Heart right ventricle (tissue), 16 donors: ENCODE measurements at regions of chr15 and their contacts with region 1.

Region 1: DNA sequence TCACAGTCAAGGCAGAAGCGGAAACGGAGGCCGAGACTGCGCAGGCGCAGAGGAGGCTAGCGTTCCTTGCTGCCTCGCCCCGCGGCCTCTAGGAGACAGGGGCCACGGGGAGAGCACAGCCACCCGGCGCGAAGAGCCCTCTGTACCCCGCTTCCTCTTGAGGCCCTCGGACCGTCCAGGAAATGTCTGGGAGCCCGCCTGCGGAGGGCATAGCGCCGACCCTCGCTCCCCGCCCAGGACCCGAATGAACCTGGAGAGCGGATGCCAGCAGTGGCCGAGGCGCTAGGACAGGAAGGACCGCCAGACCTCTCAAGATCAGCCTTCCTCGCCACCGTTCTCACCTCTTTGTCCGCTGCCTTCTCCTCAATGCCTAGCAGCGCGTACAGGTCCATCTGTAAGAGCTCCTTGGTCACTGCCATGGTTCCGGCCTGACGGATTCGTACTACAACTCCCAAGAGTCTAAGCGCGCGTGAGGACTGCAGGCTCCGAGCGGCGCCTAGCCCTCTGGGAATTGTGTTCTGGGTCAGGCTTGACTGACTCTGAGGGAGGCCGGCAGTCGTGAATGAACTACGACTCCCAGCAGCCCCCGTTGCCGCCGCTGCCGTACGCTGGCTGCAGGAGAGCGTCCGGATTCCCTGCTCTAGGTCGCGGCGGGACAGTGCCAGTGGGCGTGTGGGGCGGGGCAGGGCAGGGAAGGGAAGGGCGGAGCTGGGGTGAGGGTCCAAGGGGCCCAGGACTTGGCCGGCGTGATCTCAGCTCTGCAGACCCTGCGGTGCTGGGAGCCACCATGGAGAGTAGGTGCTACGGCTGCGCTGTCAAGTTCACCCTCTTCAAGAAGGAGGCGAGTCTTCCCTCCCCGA is at the starts of genes DNAJC17 and ZFYVE19:
- DNase-seq: peak; percentile 95 to 99
- ATAC-seq: peak; percentile 99
- H3K4me3 ChIP-seq: peak within 1 kb of the TSS; percentile 70 to 96 (median 88)
- H3K27ac ChIP-seq: peak within 1 kb of the TSS; percentile 80 to 99 (median 96)
- H3K4me1 ChIP-seq: peaks cover 3 to 56% (median 26%) of the 10 kb centered on the region in 9 donors
- H3K27me3 ChIP-seq: no peaks in the 10 kb centered on the region
- CTCF ChIP-seq: peak in 3 of 9 donors; percentile 18 to 31 (median 21)
- total RNA-seq, gene DNAJC17: 9.9 to 17.7 (median 14.7) TPM
- total RNA-seq, gene ZFYVE19: 14.2 to 29.2 (median 18.2) TPM

Region 2: DNA sequence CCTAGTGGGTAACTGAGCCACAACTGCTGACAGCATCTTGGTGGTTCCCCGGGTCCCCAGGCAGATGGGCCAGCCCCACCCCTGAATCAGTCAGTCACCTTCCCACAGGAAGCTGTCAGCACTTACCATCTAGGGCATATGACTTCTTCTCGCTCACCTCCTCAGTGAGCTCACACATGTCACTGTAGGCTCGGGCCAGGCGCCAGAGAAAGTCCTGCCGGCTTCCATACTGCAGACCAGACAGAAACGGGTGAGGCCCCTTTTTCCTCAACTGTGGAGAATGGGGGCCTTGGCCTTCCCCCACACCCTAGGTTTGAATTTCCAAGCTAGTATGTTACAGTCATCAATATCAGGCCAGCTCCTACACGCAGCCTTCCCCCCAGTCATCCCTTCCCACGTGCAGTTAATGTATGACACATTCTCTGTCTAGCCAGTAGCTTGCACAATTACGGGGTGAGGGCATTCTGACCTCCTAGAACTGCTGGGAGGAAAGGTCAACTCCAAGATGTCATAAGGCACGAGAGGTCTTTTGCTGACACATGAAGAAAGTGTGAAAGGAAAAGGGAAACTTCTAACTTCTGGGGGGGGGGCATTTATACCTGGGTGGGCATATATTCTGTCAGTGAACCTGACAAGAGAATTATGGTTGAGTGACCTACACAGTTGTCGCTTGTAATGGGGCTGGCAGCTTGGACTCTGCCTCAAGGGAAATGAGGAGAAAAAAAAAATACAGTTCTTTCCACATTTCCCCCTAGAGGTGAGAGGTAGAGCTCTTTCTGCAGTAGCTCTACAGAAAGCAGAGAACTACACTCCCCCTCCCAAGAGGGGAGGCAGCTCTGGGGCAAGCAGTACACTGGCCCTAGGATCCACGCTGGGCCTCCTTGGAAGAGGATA is 63.1 kb before region 1 on chr15:
- intact Hi-C with region 1: no loop called
- DNase-seq: no peak
- ATAC-seq: peak in 7 of 8 donors; percentile 34 to 76 (median 65)
- H3K4me3 ChIP-seq: no peak overlapping the region
- H3K27ac ChIP-seq: peak overlapping the region in 1 of 10 donors; percentile 68
- H3K4me1 ChIP-seq: peaks cover 0 to 45% (median 0%) of the 10 kb centered on the region in 9 donors
- H3K27me3 ChIP-seq: no peaks in the 10 kb centered on the region
- CTCF ChIP-seq: no peak

Region 3: GRCh38 chr15:40754883-40755811 is 52.1 kb before region 1 on chr15 and contains the start of gene RMDN3:
- intact Hi-C with region 1: loop called in 1 of 10 experiments (anchors 2 kb)
- DNase-seq: peak; percentile 90 to 94
- ATAC-seq: peak; percentile 98 to 100 (median 98)
- H3K4me3 ChIP-seq: peak within 1 kb of the TSS; percentile 74 to 96 (median 90)
- H3K27ac ChIP-seq: peak within 1 kb of the TSS in 9 of 10 donors; percentile 75 to 89 (median 82)
- H3K4me1 ChIP-seq: peaks cover 0 to 27% (median 17%) of the 10 kb centered on the region in 9 donors
- H3K27me3 ChIP-seq: no peaks in the 10 kb centered on the region
- CTCF ChIP-seq: peak in 3 of 9 donors; percentile 19 to 37 (median 21)
- total RNA-seq, gene RMDN3: 12.2 to 20.9 (median 17.6) TPM

Region 4: GRCh38 chr15:40930430-40931299 is 123.4 kb after region 1 on chr15:
- intact Hi-C with region 1: no loop called
- DNase-seq: peak; percentile 78 to 88
- ATAC-seq: peak; percentile 50 to 82 (median 68)
- H3K4me3 ChIP-seq: peak overlapping the region; percentile 55 to 96 (median 74)
- H3K27ac ChIP-seq: peak overlapping the region; percentile 77 to 96 (median 83)
- H3K4me1 ChIP-seq: peaks cover 15 to 90% (median 68%) of the 10 kb centered on the region in 9 donors
- H3K27me3 ChIP-seq: peaks cover 5 to 77% (median 33%) of the 10 kb centered on the region in 7 donors
- CTCF ChIP-seq: peak; percentile 26 to 73 (median 51)

Region 5: DNA sequence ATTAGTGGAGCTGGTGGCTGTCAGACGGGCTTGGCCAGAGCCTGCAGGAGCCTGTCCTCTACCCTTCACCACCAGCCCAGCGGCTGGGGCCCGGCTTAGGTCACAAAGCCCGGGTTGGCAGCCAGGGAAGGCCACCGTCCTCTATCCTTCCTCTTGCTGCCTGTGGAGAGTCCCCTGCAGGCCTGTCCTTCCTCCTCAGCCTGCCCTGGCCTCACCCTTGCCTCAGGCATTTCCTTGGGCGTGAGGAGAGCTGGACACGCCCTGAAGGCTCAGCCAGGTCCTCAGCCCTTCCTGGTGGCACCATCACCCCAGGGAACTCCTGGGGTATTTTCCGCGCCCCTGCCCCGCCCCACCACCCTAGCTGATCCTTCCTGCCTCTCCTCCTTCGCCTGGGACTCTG is 153.7 kb after region 1 on chr15:
- intact Hi-C with region 1: no loop called
- DNase-seq: no peak
- ATAC-seq: no peak
- H3K4me3 ChIP-seq: no peak overlapping the region
- H3K27ac ChIP-seq: no peak overlapping the region
- H3K4me1 ChIP-seq: peaks cover 1 to 35% (median 11%) of the 10 kb centered on the region in 9 donors
- H3K27me3 ChIP-seq: no peaks in the 10 kb centered on the region
- CTCF ChIP-seq: no peak